Kidney (tissue), 22 donors: ENCODE measurements at regions of chr20 and their contacts with region 1.

Region 1: GRCh38 chr20:51800060-51800794 is 2.1 kb downstream of the SALL4 start:
- DNase-seq: peak; percentile 83 to 95 (median 92)
- H3K4me3 ChIP-seq: peak overlapping the region; percentile 10 to 65 (median 45)
- H3K27ac ChIP-seq: no peak overlapping the region
- H3K4me1 ChIP-seq: peaks cover 0 to 3% (median 3%) of the 10 kb centered on the region in 3 donors
- H3K27me3 ChIP-seq: peaks cover 2% of the 10 kb centered on the region
- CTCF ChIP-seq: peak; percentile 42

Region 2: GRCh38 chr20:51643390-51643789 is 156.8 kb before region 1 on chr20:
- intact Hi-C with region 1: loop called (anchors 10 kb)
- DNase-seq: no peak
- H3K4me3 ChIP-seq: no peak overlapping the region
- H3K27ac ChIP-seq: no peak overlapping the region
- H3K4me1 ChIP-seq: no peaks in the 10 kb centered on the region
- H3K27me3 ChIP-seq: no peaks in the 10 kb centered on the region
- CTCF ChIP-seq: no peak

Region 3: GRCh38 chr20:52060794-52061714 is 260.8 kb after region 1 on chr20:
- intact Hi-C with region 1: no loop called
- DNase-seq: peak in 4 of 5 donors; percentile 55 to 83 (median 74)
- H3K4me3 ChIP-seq: no peak overlapping the region
- H3K27ac ChIP-seq: no peak overlapping the region
- H3K4me1 ChIP-seq: no peaks in the 10 kb centered on the region
- H3K27me3 ChIP-seq: no peaks in the 10 kb centered on the region
- CTCF ChIP-seq: no peak